ENCODE measurements at regions of chr3 and their contacts with region 1.

Region 1: GRCh38 chr3:15405448-15406050 is 21.8 kb downstream of the METTL6 start:
- DNase-seq: no peak
- ATAC-seq: peak; percentile 49 to 70
- H3K4me3 ChIP-seq: no peak overlapping the region
- H3K27ac ChIP-seq: no peak overlapping the region
- H3K4me1 ChIP-seq: no peaks in the 10 kb centered on the region
- H3K27me3 ChIP-seq: no peaks in the 10 kb centered on the region
- CTCF ChIP-seq: peak; percentile 29 to 66 (median 44)
- POLR2A ChIP-seq: no peak

Region 2: GRCh38 chr3:15108082-15108545 is 297.4 kb before region 1 on chr3:
- in situ Hi-C with region 1: loop called in 2 of 4 experiments (anchors 10 to 25 kb)
- intact Hi-C with region 1: loop called (anchors 5 kb)
- DNase-seq: peak; percentile 44 to 49
- ATAC-seq: peak; percentile 69 to 80
- H3K4me3 ChIP-seq: no peak overlapping the region
- H3K27ac ChIP-seq: no peak overlapping the region
- H3K4me1 ChIP-seq: peaks cover 6 to 10% of the 10 kb centered on the region in 2 donors
- H3K27me3 ChIP-seq: no peaks in the 10 kb centered on the region
- CTCF ChIP-seq: peak; percentile 63 to 93 (median 84)
- POLR2A ChIP-seq: no peak

Region 3: DNA sequence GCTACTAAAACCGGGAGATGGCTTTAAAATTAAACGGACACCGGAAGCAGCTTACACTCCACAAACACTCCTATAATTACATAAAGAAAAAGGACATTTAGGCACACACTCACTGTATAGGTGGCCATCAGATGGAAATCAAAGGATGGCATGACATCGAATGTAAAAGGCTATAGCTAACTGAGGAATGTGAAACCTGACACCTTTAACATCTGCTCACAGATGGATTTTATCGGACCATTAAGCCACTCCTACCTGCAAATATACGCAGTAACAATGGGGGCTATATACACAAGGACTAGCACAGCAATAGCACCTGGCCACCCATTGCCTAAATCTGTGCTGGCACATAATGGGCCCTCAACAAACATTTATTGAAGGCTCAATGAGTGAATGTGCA is 292.1 kb before region 1 on chr3:
- in situ Hi-C with region 1: loop called in 2 of 4 experiments (anchors 10 to 25 kb)
- intact Hi-C with region 1: loop called (anchors 5 kb)
- DNase-seq: no peak
- ATAC-seq: no peak
- H3K4me3 ChIP-seq: no peak overlapping the region
- H3K27ac ChIP-seq: no peak overlapping the region
- H3K4me1 ChIP-seq: peaks cover 4 to 8% of the 10 kb centered on the region in 2 donors
- H3K27me3 ChIP-seq: no peaks in the 10 kb centered on the region
- CTCF ChIP-seq: no peak
- POLR2A ChIP-seq: no peak